ENCODE measurements at regions of chr18 and their contacts with region 1.

Region 1: GRCh38 chr18:9136315-9137155 is at the start of gene ANKRD12:
- DNase-seq: peak; percentile 96
- ATAC-seq: peak; percentile 88
- H3K4me3 ChIP-seq: peak within 1 kb of the TSS; percentile 95
- H3K27ac ChIP-seq: peak within 1 kb of the TSS; percentile 97
- H3K4me1 ChIP-seq: peaks cover 8% of the 10 kb centered on the region
- H3K27me3 ChIP-seq: no peaks in the 10 kb centered on the region
- CTCF ChIP-seq: no peak
- POLR2A ChIP-seq: peak; percentile 93
- RAD21 ChIP-seq: peak; percentile 10; the same call in 1 of the 2 replicates
- total RNA-seq, gene ANKRD12: 12.9 and 31.7 TPM in 2 replicates

Region 2: GRCh38 chr18:8673256-8674209 is 463.0 kb before region 1 on chr18:
- CTCF ChIA-PET with region 1: no interaction called
- POLR2A ChIA-PET with region 1: no interaction called
- dilution Hi-C with region 1: no loop called
- in situ Hi-C with region 1: loop called (anchors 10 kb)
- intact Hi-C with region 1: no loop called
- DNase-seq: peak; percentile 35
- ATAC-seq: no peak; the same call in 1 of the 2 replicates
- H3K4me3 ChIP-seq: no peak overlapping the region
- H3K27ac ChIP-seq: no peak overlapping the region
- H3K4me1 ChIP-seq: peaks cover 4% of the 10 kb centered on the region
- H3K27me3 ChIP-seq: no peaks in the 10 kb centered on the region; the same call in 1 of the 2 replicates
- CTCF ChIP-seq: no peak
- POLR2A ChIP-seq: no peak
- RAD21 ChIP-seq: no peak

Region 3: GRCh38 chr18:8828300-8828699 is 308.2 kb before region 1 on chr18:
- CTCF ChIA-PET with region 1: no interaction called
- POLR2A ChIA-PET with region 1: no interaction called
- dilution Hi-C with region 1: no loop called
- in situ Hi-C with region 1: no loop called
- intact Hi-C with region 1: no loop called
- DNase-seq: no peak
- ATAC-seq: no peak
- H3K4me3 ChIP-seq: no peak overlapping the region
- H3K27ac ChIP-seq: 0 out of 2 replicates have a peak overlapping the region, but pooled peaks have one; percentile 11
- H3K4me1 ChIP-seq: peaks cover 16% of the 10 kb centered on the region
- H3K27me3 ChIP-seq: no peaks in the 10 kb centered on the region
- CTCF ChIP-seq: no peak
- POLR2A ChIP-seq: no peak
- RAD21 ChIP-seq: no peak

Region 4: GRCh38 chr18:9102508-9103375 is 33.8 kb before region 1 on chr18 and contains the start of gene NDUFV2:
- CTCF ChIA-PET with region 1: no interaction called
- POLR2A ChIA-PET with region 1: no interaction called
- dilution Hi-C with region 1: no loop called
- in situ Hi-C with region 1: no loop called
- intact Hi-C with region 1: loop called (anchors 2 kb)
- DNase-seq: peak; percentile 93
- ATAC-seq: peak; percentile 97
- H3K4me3 ChIP-seq: peak within 1 kb of the TSS; percentile 97
- H3K27ac ChIP-seq: peak within 1 kb of the TSS; percentile 99
- H3K4me1 ChIP-seq: peaks cover 2% of the 10 kb centered on the region; the same call in 1 of the 2 replicates
- H3K27me3 ChIP-seq: no peaks in the 10 kb centered on the region
- CTCF ChIP-seq: no peak
- POLR2A ChIP-seq: peak; percentile 45; the same call in 1 of the 2 replicates
- RAD21 ChIP-seq: no peak
- total RNA-seq, gene NDUFV2: 106 and 115 TPM in 2 replicates

Region 5: DNA sequence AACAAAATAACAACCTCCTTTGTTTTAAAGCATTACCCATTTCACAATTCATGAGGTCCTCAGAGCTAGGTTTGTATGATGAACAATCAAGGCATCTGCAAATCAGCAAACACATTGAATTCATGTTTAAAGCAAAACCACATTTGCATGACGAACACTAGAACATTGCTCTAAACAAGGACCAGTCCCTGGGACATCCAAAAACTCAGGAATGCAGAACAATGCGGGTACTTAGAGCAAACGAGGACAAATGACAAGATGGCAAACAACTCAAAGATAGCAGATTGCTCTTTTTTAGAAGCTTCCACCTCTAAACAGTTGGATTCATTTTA is 293.1 kb after region 1 on chr18:
- CTCF ChIA-PET with region 1: no interaction called
- POLR2A ChIA-PET with region 1: no interaction called
- dilution Hi-C with region 1: no loop called
- in situ Hi-C with region 1: no loop called
- intact Hi-C with region 1: no loop called
- DNase-seq: peak; percentile 46
- ATAC-seq: peak; percentile 52; the same call in 1 of the 2 replicates
- H3K4me3 ChIP-seq: no peak overlapping the region
- H3K27ac ChIP-seq: no peak overlapping the region
- H3K4me1 ChIP-seq: peaks cover 6% of the 10 kb centered on the region; the same call in 1 of the 2 replicates
- H3K27me3 ChIP-seq: no peaks in the 10 kb centered on the region
- CTCF ChIP-seq: no peak
- POLR2A ChIP-seq: no peak
- RAD21 ChIP-seq: no peak

Region 6: GRCh38 chr18:9594823-9595596 is 458.5 kb after region 1 on chr18:
- CTCF ChIA-PET with region 1: no interaction called
- POLR2A ChIA-PET with region 1: no interaction called
- dilution Hi-C with region 1: no loop called
- in situ Hi-C with region 1: no loop called
- intact Hi-C with region 1: no loop called
- DNase-seq: peak; percentile 58
- ATAC-seq: peak; percentile 85
- H3K4me3 ChIP-seq: peak overlapping the region; percentile 32; the same call in 1 of the 2 replicates
- H3K27ac ChIP-seq: peak overlapping the region; percentile 33; the same call in 1 of the 2 replicates
- H3K4me1 ChIP-seq: peaks cover 7% of the 10 kb centered on the region
- H3K27me3 ChIP-seq: no peaks in the 10 kb centered on the region
- CTCF ChIP-seq: no peak
- POLR2A ChIP-seq: no peak
- RAD21 ChIP-seq: no peak